ENCODE measurements at regions of chr13 and their contacts with region 1.

Region 1: DNA sequence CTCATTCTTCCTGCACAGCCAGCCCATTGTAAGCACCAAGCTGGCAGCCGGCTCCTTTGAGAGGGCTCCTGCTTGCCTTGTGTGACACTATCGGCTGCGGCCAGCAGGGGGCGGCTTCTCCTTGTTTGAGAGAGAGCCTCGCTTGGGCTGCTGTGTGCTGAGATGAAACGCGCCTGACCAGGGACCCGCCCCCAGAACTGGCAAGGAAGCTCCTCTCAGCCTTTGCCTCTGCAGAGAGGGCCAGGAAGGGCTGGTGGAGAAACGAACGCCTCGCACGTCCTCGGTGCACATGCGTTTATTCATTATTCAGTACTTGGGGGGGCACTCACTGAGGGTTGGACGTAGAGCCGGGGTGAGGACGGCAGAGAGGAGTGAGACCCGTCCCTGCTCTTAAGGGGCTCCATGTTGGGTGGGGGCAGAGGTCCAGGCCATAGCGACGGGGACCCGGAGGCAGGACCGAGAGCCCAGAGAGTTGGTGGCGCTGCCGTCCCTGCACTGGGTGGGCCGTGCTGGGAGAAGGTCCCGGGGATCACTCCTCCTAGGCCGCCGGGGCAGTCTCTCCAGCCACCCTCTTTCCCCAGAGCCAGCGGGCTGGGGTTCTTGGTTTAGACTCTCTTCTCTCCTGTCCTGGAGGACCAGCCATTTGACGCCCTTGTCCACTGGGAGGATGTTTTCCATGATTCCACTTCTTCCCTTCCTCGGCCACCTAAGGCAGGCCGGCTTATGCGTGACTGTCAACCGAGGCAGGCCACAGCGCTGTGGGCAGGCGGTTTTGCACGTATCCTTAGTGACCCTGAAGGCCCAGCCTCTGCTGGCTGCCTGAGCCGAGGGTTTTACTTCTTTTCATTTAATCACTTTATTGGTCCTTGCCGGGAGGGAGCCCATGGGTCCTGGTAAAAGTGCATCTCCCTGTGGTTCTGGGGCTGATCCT is 174.5 kb downstream of the KATNAL1 start:
- DNase-seq: peak; percentile 88 to 99 (median 96)
- ATAC-seq: peak; percentile 99
- H3K4me3 ChIP-seq: no peak overlapping the region
- H3K4me3 Mint-ChIP-seq: peak overlapping the region; percentile 32 to 60 (median 47)
- H3K27ac ChIP-seq: no peak overlapping the region
- H3K27ac Mint-ChIP-seq: peak overlapping the region; percentile 70 to 79
- H3K4me1 ChIP-seq: peaks cover 2 to 20% of the 10 kb centered on the region in 2 experiments
- H3K4me1 Mint-ChIP-seq: peaks cover 14 to 27% (median 17%) of the 10 kb centered on the region in 3 donors
- H3K27me3 ChIP-seq: no peaks in the 10 kb centered on the region
- H3K27me3 Mint-ChIP-seq: no peaks in the 10 kb centered on the region

Region 2: DNA sequence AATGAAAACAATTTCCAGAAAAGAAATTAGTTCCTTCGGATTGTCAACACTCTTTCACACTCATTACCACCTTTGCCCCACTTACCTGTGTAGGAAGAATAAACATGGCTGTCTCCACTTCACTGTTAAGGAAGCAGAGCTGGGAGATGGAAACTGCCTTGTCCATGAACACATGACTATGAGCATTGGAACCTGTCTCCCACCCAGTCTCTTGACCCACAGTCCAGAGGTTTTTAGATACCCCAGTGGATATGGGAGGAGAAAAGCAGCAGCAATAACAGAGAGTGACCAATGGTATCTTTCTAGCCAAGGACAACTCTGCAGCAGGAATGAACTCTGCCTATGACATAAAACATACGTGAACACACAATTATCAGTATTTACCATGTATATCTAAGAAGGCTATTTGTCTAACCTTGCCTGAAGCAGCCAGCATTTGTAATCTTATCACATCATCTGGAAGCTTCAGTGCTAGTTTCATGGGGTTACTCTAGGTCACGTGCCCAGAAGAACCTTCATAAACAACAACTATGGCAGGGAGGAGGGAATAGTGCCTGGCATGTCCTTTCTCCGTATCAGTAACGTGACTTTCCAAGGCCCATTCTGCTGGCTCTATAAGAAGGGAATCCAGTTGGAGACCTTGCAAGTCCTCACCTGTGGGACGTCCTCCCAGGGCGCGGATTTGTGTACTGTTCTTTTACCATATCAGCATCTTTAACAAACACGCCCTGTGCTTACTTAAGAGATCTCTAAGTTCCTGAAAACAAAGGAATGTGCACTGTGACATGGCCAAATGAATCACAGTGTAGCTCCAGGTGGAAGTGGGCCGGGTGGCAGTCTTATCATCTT is 60.7 kb before region 1 on chr13:
- CTCF ChIA-PET with region 1: no interaction called
- POLR2A ChIA-PET with region 1: no interaction called
- DNase-seq: no peak
- ATAC-seq: no peak
- H3K4me3 ChIP-seq: no peak overlapping the region
- H3K4me3 Mint-ChIP-seq: no peak overlapping the region
- H3K27ac ChIP-seq: no peak overlapping the region
- H3K27ac Mint-ChIP-seq: no peak overlapping the region
- H3K4me1 ChIP-seq: no peaks in the 10 kb centered on the region
- H3K4me1 Mint-ChIP-seq: peaks cover 0 to 3% (median 0%) of the 10 kb centered on the region in 3 donors
- H3K27me3 ChIP-seq: no peaks in the 10 kb centered on the region
- H3K27me3 Mint-ChIP-seq: no peaks in the 10 kb centered on the region

Region 3: DNA sequence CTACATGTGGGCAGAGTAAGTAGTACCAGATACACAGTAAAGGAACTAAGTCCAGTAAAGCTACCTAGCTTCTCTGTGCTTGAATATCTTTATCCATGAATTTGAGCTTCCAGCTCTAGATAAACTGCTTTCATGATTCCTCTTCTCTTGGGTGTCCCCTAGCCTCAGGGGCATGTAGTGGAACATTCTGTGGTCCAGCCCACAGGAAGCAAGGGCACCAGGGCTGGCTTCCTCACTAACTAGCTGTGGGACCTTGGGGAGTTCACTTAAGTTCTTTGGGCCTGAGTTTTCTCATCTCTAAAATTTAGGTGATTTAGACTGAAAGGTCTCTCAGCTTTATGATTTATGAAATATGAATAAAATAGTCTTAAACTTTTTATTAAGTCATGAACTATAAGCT is 11.2 kb before region 1 on chr13:
- CTCF ChIA-PET with region 1: interaction called, 10 to 22 read pairs
- POLR2A ChIA-PET with region 1: no interaction called
- DNase-seq: no peak
- ATAC-seq: no peak
- H3K4me3 ChIP-seq: no peak overlapping the region
- H3K4me3 Mint-ChIP-seq: no peak overlapping the region
- H3K27ac ChIP-seq: no peak overlapping the region
- H3K27ac Mint-ChIP-seq: no peak overlapping the region
- H3K4me1 ChIP-seq: peaks cover 21 to 30% of the 10 kb centered on the region in 2 experiments
- H3K4me1 Mint-ChIP-seq: peaks cover 37 to 54% (median 40%) of the 10 kb centered on the region in 3 donors
- H3K27me3 ChIP-seq: no peaks in the 10 kb centered on the region
- H3K27me3 Mint-ChIP-seq: no peaks in the 10 kb centered on the region

Region 4: DNA sequence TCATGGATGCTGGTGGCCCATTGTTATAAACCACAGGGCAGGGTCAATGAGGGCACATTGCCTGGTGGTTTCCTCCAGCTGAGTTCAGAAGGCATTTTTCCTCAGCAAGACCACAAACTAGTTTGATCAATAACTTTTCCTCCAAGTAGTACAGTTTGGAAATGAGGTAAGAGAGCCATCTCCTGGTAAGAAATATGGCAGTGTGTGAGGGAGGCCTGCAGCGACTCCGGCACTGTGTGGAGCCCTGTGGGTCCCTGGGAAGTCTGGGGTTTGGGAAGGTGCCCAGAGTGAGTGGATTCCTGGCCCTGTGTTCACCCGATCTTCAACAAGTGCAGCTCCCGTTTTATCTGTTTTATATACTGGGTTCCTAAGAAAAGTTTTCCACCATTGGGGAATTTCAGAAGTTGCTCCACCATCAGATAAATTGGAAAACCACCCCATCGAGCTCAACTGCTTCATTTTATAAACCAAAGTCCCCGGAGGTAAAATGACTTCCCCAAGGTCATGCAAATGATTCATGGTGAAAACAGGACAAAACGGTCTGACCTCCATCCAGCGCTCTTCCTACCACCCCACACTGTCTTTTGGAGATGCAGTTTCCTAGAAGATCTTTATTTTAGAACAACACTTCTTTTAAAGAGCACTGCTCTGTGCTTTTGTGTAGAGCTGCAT is 26.0 kb after region 1 on chr13:
- CTCF ChIA-PET with region 1: interaction called, 64 to 75 read pairs
- POLR2A ChIA-PET with region 1: interaction called in 1 of 2 experiments, 3 read pairs
- DNase-seq: peak in 3 of 35 experiments; percentile 4 to 71 (median 20)
- ATAC-seq: peak in 3 of 4 experiments; percentile 70 to 82 (median 72)
- H3K4me3 ChIP-seq: no peak overlapping the region
- H3K4me3 Mint-ChIP-seq: no peak overlapping the region
- H3K27ac ChIP-seq: no peak overlapping the region
- H3K27ac Mint-ChIP-seq: peak overlapping the region; percentile 75 to 78
- H3K4me1 ChIP-seq: peaks cover 2 to 54% of the 10 kb centered on the region in 2 experiments
- H3K4me1 Mint-ChIP-seq: peaks cover 38 to 56% (median 54%) of the 10 kb centered on the region in 3 donors
- H3K27me3 ChIP-seq: no peaks in the 10 kb centered on the region
- H3K27me3 Mint-ChIP-seq: no peaks in the 10 kb centered on the region

Region 5: GRCh38 chr13:30465585-30466357 is 332.9 kb after region 1 on chr13 and contains the start of gene HMGB1:
- CTCF ChIA-PET with region 1: interaction called, 7 to 12 read pairs
- POLR2A ChIA-PET with region 1: interaction called in 1 of 2 experiments, 3 read pairs
- DNase-seq: peak; percentile 87 to 99 (median 97)
- ATAC-seq: peak; percentile 83 to 89 (median 86)
- H3K4me3 ChIP-seq: peak within 1 kb of the TSS; percentile 55 to 68
- H3K4me3 Mint-ChIP-seq: peak within 1 kb of the TSS; percentile 88 to 95 (median 89)
- H3K27ac ChIP-seq: peak within 1 kb of the TSS; percentile 67
- H3K27ac Mint-ChIP-seq: peak within 1 kb of the TSS; percentile 97 to 99
- H3K4me1 ChIP-seq: peaks cover 14 to 22% of the 10 kb centered on the region in 2 experiments
- H3K4me1 Mint-ChIP-seq: peaks cover 27 to 41% (median 30%) of the 10 kb centered on the region in 3 donors
- H3K27me3 ChIP-seq: no peaks in the 10 kb centered on the region
- H3K27me3 Mint-ChIP-seq: peaks cover 0 to 2% of the 10 kb centered on the region in 2 donors
- total RNA-seq, gene HMGB1: 290 to 406 (median 300) TPM

Measured in T-cell (primary cell).